HCT116 (cell line): ENCODE measurements at regions of chr13 and their contacts with region 1.

Region 1: DNA sequence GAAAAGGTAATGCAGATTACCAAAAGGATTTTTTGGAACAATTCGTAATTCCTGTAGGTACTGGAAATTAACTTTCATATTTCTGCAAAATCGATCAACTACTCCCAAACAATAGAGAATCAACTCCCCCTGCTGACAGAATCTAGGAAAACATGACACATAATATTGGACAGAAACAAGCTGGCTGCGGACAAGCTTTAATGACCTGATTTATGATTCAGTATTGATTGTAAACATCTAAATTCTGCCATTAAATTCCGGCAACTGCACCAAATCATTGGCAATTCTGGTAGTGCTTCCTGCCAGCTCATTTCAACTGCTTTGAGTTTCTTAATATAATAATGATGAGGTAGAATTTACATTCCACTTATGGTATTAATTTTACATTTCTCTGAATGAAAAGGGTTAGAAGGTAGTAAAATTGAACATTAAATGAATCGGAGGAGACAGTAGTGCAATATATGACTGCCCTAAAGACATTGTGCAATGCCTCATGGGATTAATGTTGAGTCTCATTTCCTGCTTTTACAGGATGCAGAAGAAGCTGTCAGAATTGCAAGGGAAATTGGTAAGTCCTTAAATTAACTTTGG is 146.5 kb downstream of the PCCA start:
- DNase-seq: peak; percentile 45
- ATAC-seq: peak; percentile 62; the same call in 1 of the 2 replicates
- H3K4me3 ChIP-seq: no peak overlapping the region
- H3K27ac ChIP-seq: no peak overlapping the region
- H3K4me1 ChIP-seq: peaks cover 18 to 20% of the 10 kb centered on the region in 2 experiments
- H3K27me3 ChIP-seq: no peaks in the 10 kb centered on the region
- CTCF ChIP-seq: peak; percentile 44 to 93 (median 71)
- POLR2A ChIP-seq: no peak
- RAD21 ChIP-seq: peak; percentile 89

Region 2: GRCh38 chr13:99617474-99618255 is 617.7 kb before region 1 on chr13:
- CTCF ChIA-PET with region 1: no interaction called
- POLR2A ChIA-PET with region 1: no interaction called
- RAD21 ChIA-PET with region 1: interaction called in 1 of 2 experiments, 5 read pairs
- intact Hi-C with region 1: loop called (anchors 5 kb)
- DNase-seq: peak; percentile 18
- ATAC-seq: peak; percentile 83
- H3K4me3 ChIP-seq: no peak overlapping the region
- H3K27ac ChIP-seq: no peak overlapping the region
- H3K4me1 ChIP-seq: peaks cover 0 to 6% of the 10 kb centered on the region in 2 experiments; a peak in 1 of 4 replicates
- H3K27me3 ChIP-seq: no peaks in the 10 kb centered on the region
- CTCF ChIP-seq: peak; percentile 55 to 87 (median 79); a peak in 5 of 6 replicates
- POLR2A ChIP-seq: no peak
- RAD21 ChIP-seq: peak; percentile 79

Region 3: GRCh38 chr13:99900960-99901359 is 334.4 kb before region 1 on chr13:
- CTCF ChIA-PET with region 1: interaction called, 5 read pairs
- POLR2A ChIA-PET with region 1: no interaction called
- RAD21 ChIA-PET with region 1: no interaction called
- intact Hi-C with region 1: loop called (anchors 1 kb)
- DNase-seq: no peak
- ATAC-seq: peak; percentile 15; the same call in 1 of the 2 replicates
- H3K4me3 ChIP-seq: no peak overlapping the region
- H3K27ac ChIP-seq: no peak overlapping the region
- H3K4me1 ChIP-seq: no peaks in the 10 kb centered on the region
- H3K27me3 ChIP-seq: no peaks in the 10 kb centered on the region
- CTCF ChIP-seq: no peak
- POLR2A ChIP-seq: no peak
- RAD21 ChIP-seq: no peak

Region 4: GRCh38 chr13:99916366-99917103 is 318.9 kb before region 1 on chr13:
- CTCF ChIA-PET with region 1: interaction called, 13 read pairs
- POLR2A ChIA-PET with region 1: no interaction called
- RAD21 ChIA-PET with region 1: interaction called, 4 read pairs
- intact Hi-C with region 1: loop called (anchors 1 kb)
- DNase-seq: peak; percentile 73
- ATAC-seq: peak; percentile 99
- H3K4me3 ChIP-seq: no peak overlapping the region
- H3K27ac ChIP-seq: no peak overlapping the region
- H3K4me1 ChIP-seq: no peaks in the 10 kb centered on the region
- H3K27me3 ChIP-seq: no peaks in the 10 kb centered on the region
- CTCF ChIP-seq: peak; percentile 99 to 100 (median 99)
- POLR2A ChIP-seq: no peak
- RAD21 ChIP-seq: peak; percentile 97

Region 5: GRCh38 chr13:100434010-100434763 is 198.8 kb after region 1 on chr13:
- CTCF ChIA-PET with region 1: no interaction called
- POLR2A ChIA-PET with region 1: no interaction called
- RAD21 ChIA-PET with region 1: no interaction called
- intact Hi-C with region 1: no loop called
- DNase-seq: peak; percentile 78
- ATAC-seq: peak; percentile 90
- H3K4me3 ChIP-seq: peak overlapping the region in 1 of 2 experiments; percentile 34; a peak in 2 of 4 replicates
- H3K27ac ChIP-seq: peak overlapping the region; percentile 78
- H3K4me1 ChIP-seq: peaks cover 35% of the 10 kb centered on the region in 2 experiments
- H3K27me3 ChIP-seq: no peaks in the 10 kb centered on the region
- CTCF ChIP-seq: no peak
- POLR2A ChIP-seq: no peak
- RAD21 ChIP-seq: peak; percentile 33